Natural killer cell (primary cell): ENCODE measurements at regions of chr17 and their contacts with region 1.

Region 1: DNA sequence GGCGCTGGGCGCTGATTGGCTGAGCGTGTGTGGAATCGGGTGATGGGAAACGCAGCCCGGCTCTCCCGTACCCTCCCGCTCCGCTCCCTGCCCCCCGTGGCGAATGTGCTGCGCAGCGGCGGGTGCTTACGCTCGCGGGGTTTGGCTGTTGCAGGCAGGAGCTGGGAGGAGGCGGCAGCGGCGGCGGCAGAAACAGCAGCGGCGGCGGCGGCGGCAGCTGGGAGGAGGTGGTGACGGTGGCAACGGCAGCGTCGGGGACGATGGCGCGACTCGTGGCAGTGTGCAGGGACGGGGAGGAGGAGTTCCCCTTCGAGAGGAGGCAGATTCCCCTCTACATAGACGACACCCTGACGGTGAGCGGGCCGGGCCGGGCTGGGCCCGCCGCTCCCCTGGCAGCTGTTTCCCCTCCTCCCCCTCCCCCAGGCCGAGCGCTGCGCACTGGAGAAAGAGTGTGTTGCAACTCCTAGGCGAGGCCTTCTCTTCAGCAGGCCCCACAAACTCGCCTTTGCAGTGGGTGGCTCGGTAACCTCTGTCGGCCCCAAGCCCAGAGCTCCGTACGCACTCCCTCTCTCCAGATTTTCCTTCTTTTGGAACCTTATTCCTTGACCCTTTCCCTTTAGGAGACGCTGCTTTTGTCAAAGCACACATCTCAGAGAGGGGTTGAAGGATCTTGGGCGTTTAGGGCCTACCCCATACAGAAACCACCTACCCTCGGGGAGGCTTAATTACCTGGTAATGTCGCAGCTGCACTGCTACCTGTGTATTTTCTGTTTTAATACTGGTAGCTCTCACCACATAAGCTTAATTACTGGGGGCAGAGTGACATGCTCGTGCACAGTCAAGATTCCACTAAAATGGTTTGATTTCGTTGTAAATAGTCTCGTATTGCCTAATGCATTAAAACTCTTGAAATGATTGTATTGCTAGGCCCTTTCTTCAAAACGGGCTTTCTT is 1.0 kb downstream of the GGNBP2 start:
- DNase-seq: peak; percentile 96 to 98
- ATAC-seq: peak; percentile 65 to 87 (median 75)
- H3K4me3 ChIP-seq: peak overlapping the region; percentile 89
- H3K4me3 Mint-ChIP-seq: peak overlapping the region; percentile 88
- H3K27ac ChIP-seq: peak overlapping the region; percentile 100
- H3K27ac Mint-ChIP-seq: peak overlapping the region; percentile 98 to 99
- H3K4me1 ChIP-seq: peaks cover 30% of the 10 kb centered on the region
- H3K4me1 Mint-ChIP-seq: peaks cover 35 to 42% of the 10 kb centered on the region in 2 donors
- H3K27me3 ChIP-seq: no peaks in the 10 kb centered on the region
- H3K27me3 Mint-ChIP-seq: no peaks in the 10 kb centered on the region
- CTCF ChIP-seq: no peak

Region 2: GRCh38 chr17:35587074-35587971 is 958.4 kb before region 1 on chr17 and contains the start of gene AP2B1:
- intact Hi-C with region 1: loop called (anchors 5 kb)
- DNase-seq: peak; percentile 99
- ATAC-seq: peak; percentile 94 to 98 (median 98)
- H3K4me3 ChIP-seq: peak within 1 kb of the TSS; percentile 70
- H3K4me3 Mint-ChIP-seq: peak within 1 kb of the TSS; percentile 94
- H3K27ac ChIP-seq: peak within 1 kb of the TSS; percentile 88
- H3K27ac Mint-ChIP-seq: peak within 1 kb of the TSS; percentile 94 to 100
- H3K4me1 ChIP-seq: peaks cover 13% of the 10 kb centered on the region
- H3K4me1 Mint-ChIP-seq: peaks cover 28 to 33% of the 10 kb centered on the region in 2 donors
- H3K27me3 ChIP-seq: no peaks in the 10 kb centered on the region
- H3K27me3 Mint-ChIP-seq: peaks cover 0 to 9% of the 10 kb centered on the region in 2 donors
- CTCF ChIP-seq: no peak
- total RNA-seq, gene AP2B1: 111 to 148 (median 139) TPM

Region 3: DNA sequence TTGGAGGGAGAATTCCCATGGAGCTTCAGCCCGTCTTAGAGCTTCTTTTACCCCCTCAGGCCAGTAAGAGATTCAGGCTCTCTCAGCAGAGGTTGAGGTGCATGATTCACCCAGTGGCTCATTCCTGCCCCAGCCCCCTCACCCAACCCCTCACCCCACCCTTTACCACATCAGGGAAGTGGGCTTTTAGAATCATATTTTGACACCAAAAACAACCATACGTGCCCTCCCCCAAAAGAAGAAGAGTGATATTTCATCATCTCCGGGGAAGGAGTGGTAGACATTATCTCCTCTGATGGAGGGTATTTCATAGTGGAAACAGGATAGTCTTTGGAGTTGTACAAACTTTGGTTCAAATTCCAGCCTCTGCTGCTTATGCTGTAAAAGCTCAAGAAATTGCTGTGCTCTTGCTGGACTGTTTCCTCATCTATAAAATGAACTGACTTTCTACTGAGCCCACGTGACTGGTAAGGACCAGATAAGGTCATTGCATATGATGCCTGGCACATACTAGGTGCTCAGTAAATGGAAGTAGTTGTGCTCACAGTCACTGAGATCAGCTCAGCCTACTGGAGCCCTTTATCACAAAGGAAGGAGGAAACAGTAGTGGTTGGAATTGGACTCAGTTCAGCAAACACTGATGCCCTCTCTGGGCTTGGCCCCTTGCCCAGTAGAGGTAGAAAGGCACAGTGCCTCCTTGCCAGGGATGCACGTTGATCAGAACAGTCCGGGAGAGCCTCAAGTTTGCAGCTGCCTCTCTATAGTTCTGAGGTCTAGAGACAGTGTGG is 647.3 kb before region 1 on chr17:
- intact Hi-C with region 1: no loop called
- DNase-seq: peak in 1 of 2 donors; percentile 45
- ATAC-seq: peak; percentile 2 to 49 (median 25)
- H3K4me3 ChIP-seq: no peak overlapping the region
- H3K4me3 Mint-ChIP-seq: peak overlapping the region; percentile 82
- H3K27ac ChIP-seq: peak overlapping the region; percentile 76
- H3K27ac Mint-ChIP-seq: peak overlapping the region; percentile 96 to 97
- H3K4me1 ChIP-seq: peaks cover 98% of the 10 kb centered on the region
- H3K4me1 Mint-ChIP-seq: peaks cover 84 to 91% of the 10 kb centered on the region in 2 donors
- H3K27me3 ChIP-seq: no peaks in the 10 kb centered on the region
- H3K27me3 Mint-ChIP-seq: no peaks in the 10 kb centered on the region
- CTCF ChIP-seq: no peak

Region 4: DNA sequence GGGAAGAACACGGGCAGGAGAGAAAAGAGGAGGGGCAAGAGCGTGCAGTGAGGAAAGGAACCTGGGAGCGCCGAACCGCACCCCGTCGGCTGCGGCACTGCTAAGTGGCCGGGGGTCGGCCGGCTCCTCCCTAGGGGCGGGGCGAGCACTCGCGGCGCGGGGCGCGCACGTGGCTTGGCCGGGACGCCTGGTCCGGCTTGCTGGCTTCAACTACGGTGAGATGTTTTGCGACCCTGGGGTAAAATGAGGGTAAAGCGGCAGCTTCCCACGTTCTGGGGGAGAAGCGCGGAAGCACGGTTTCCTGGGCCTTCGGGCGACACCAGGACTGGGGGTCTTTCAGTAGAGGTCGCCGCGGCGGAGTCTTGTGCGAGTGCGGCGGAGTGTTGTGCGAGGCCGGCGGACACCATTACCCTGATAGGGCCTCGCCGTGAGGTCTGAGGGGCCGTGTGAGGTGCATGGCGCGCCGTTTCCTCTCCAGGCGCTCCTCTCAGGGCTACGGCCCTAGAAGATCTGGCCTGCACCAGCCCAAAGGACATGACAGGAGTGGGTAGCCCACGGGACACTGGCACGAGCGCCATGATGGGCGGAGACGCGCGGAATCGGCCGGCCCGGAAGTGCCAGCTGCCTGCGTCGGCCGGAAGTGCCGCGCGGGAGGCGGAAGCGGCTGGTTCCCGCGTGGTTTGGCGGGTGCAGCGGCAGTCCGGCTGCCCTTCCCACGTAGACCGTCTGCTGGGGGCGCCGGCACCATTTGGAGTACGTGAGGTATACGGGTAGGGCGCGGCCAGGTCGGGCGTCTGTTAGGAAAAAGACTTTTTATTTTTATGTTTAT is 10.7 kb before region 1 on chr17 and contains the starts of genes MYO19 and PIGW:
- intact Hi-C with region 1: loop called (anchors 1 kb)
- DNase-seq: peak; percentile 81 to 92
- ATAC-seq: peak; percentile 84 to 90 (median 85)
- H3K4me3 ChIP-seq: peak within 1 kb of the TSS; percentile 100
- H3K4me3 Mint-ChIP-seq: peak within 1 kb of the TSS; percentile 98
- H3K27ac ChIP-seq: peak within 1 kb of the TSS; percentile 98
- H3K27ac Mint-ChIP-seq: peak within 1 kb of the TSS; percentile 96 to 99
- H3K4me1 ChIP-seq: peaks cover 19% of the 10 kb centered on the region
- H3K4me1 Mint-ChIP-seq: peaks cover 21 to 28% of the 10 kb centered on the region in 2 donors
- H3K27me3 ChIP-seq: no peaks in the 10 kb centered on the region
- H3K27me3 Mint-ChIP-seq: no peaks in the 10 kb centered on the region
- CTCF ChIP-seq: no peak
- total RNA-seq, gene MYO19: 84.2 to 119 (median 104) TPM
- total RNA-seq, gene PIGW: 4.6 to 8.3 (median 5.0) TPM